ENCODE measurements at regions of chr6 and their contacts with region 1.

Region 1: GRCh38 chr6:70884074-70884983 is 72.5 kb downstream of the B3GAT2 start:
- DNase-seq: peak; percentile 88
- H3K4me3 Mint-ChIP-seq: no peak overlapping the region
- H3K27ac Mint-ChIP-seq: no peak overlapping the region
- H3K4me1 Mint-ChIP-seq: no peaks in the 10 kb centered on the region
- H3K27me3 Mint-ChIP-seq: peaks cover 14% of the 10 kb centered on the region

Region 2: GRCh38 chr6:70310063-70310694 is 574.1 kb before region 1 on chr6:
- intact Hi-C with region 1: loop called (anchors 10 kb)
- DNase-seq: peak; percentile 63
- H3K4me3 Mint-ChIP-seq: no peak overlapping the region
- H3K27ac Mint-ChIP-seq: no peak overlapping the region
- H3K4me1 Mint-ChIP-seq: no peaks in the 10 kb centered on the region
- H3K27me3 Mint-ChIP-seq: peaks cover 20% of the 10 kb centered on the region

Region 3: DNA sequence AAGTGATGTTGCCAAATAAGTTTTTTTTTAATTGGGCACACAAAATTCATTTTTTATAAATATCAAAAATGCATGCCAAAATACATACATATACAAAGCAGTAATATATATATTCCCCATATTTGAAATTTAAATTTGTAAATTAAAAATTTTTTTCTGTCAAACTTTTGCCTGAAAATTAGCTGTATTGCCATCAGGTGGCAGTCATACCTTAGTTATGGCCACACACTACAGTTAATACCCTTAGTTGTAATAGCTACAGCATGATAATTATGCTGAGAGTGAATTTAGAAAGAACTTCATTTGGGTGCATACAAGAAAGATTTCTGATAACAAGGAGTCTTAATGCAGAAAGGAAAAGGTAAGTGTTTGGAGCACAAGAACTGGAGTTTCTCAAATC is 363.8 kb before region 1 on chr6:
- intact Hi-C with region 1: loop called (anchors 1 kb)
- DNase-seq: peak; percentile 68
- H3K4me3 Mint-ChIP-seq: no peak overlapping the region
- H3K27ac Mint-ChIP-seq: no peak overlapping the region
- H3K4me1 Mint-ChIP-seq: peaks cover 4% of the 10 kb centered on the region
- H3K27me3 Mint-ChIP-seq: no peaks in the 10 kb centered on the region

Region 4: GRCh38 chr6:70651326-70651905 is 232.9 kb before region 1 on chr6:
- intact Hi-C with region 1: no loop called
- DNase-seq: peak; percentile 94
- H3K4me3 Mint-ChIP-seq: peak overlapping the region; percentile 71
- H3K27ac Mint-ChIP-seq: peak overlapping the region; percentile 84
- H3K4me1 Mint-ChIP-seq: peaks cover 45% of the 10 kb centered on the region
- H3K27me3 Mint-ChIP-seq: no peaks in the 10 kb centered on the region

Region 5: GRCh38 chr6:70955441-70956190 is 71.3 kb after region 1 on chr6:
- intact Hi-C with region 1: loop called (anchors 5 kb)
- DNase-seq: peak; percentile 96
- H3K4me3 Mint-ChIP-seq: peak overlapping the region; percentile 85
- H3K27ac Mint-ChIP-seq: no peak overlapping the region
- H3K4me1 Mint-ChIP-seq: peaks cover 8% of the 10 kb centered on the region
- H3K27me3 Mint-ChIP-seq: peaks cover 80% of the 10 kb centered on the region

Measured in activated CD4-positive, alpha-beta T cell treated with anti-CD3 and anti-CD28 coated beads, Interleukin-2, amount 10 ng/mL, durations not matched to agents 24 days and 14 days (primary cell).